GM13976 (cell line): ENCODE measurements at regions of chr6 and their contacts with region 1.

Region 1: DNA sequence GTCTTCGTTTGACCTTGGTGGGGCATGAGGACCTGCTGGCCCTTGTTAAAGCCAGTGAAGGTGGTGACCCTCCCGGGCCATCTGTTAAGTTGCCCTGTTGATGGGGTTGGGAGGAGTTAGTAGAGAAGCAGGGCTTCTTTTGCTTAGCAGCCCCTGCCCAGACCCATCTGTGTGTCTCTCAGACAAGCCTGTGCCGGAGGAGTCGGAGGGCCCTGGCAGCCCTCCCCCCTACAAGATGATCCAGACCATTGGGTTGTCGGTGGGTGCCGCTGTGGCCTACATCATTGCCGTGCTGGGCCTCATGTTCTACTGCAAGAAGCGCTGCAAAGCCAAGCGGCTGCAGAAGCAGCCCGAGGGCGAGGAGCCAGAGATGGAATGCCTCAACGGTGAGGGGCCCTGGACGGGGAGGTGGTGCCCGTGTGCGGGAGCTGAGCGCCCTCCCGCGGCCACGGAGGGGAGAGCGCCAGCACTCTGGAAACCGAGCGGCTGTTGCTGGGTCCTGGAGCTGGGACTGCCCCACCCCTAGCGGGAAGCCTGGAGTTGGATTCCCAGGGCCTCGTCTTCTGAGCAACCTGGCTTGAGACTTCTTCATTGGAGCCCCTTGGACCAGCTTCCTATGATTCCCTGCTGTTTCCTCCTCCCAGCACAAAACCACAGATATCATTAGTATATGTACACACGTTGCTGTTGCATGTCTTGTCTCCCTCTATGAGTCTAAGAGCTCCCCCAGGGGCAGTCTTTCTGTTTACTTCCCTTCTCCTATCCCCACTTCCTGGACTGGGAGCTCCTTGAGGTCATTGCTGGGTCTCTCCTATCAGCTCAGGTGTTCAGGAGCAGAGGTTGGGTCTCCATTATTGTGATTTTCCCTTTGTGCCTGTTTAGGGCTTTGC is 27.6 kb upstream of the SRF start:
- DNase-seq: peak; percentile 95
- CTCF ChIP-seq: peak; percentile 96

Region 2: DNA sequence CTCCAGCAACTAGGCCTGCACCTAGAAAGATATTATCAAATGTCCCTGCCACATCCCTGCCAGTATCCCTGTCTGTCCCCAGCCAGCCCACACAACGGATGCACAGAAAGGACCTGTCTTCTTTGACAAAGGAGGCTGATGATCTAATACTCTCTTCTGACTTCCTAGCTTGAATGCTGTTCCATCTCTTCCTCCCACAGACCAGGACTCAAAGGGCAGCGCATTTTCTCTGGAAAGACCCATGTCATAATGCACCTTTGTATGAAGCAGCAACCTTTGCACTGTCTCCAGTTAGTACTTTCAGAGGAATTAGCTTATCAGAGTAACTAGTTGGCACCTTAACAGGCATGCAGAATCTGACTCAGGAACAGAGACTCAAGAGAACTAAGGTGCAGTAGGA is 1146.5 kb before region 1 on chr6:
- in situ Hi-C with region 1: no loop called
- DNase-seq: no peak
- CTCF ChIP-seq: no peak

Region 3: GRCh38 chr6:42907336-42907735 is 236.1 kb before region 1 on chr6:
- in situ Hi-C with region 1: loop called (anchors 5 kb)
- DNase-seq: no peak
- CTCF ChIP-seq: no peak